ENCODE measurements at regions of chr5 and their contacts with region 1.

Region 1: GRCh38 chr5:39376293-39376714 is 12.0 kb upstream of the C9 start:
- DNase-seq: peak; percentile 49
- H3K4me3 Mint-ChIP-seq: no peak overlapping the region
- H3K27ac Mint-ChIP-seq: no peak overlapping the region
- H3K4me1 Mint-ChIP-seq: no peaks in the 10 kb centered on the region
- H3K27me3 Mint-ChIP-seq: peaks cover 14% of the 10 kb centered on the region

Region 2: DNA sequence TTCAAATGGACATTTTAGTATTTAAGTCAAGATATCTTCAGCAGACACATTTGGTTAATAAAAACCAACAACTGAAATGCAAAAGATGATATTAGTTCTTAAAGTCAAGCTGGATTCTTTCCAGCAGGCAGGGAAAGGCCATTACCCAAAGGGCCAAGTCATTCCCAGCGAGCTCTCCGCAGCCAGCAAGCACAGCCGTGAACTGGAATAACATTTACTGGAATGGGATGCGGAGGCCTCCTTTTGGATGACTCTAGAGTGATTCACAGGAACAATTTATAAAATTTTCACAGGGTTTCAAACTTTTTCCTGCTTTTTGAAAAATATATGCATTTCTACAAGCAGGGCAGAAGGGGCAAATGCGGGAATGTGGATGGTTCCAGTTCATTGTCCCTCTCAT is 125.1 kb after region 1 on chr5:
- CTCF ChIA-PET with region 1: no interaction called
- DNase-seq: no peak
- H3K4me3 Mint-ChIP-seq: no peak overlapping the region
- H3K27ac Mint-ChIP-seq: no peak overlapping the region
- H3K4me1 Mint-ChIP-seq: no peaks in the 10 kb centered on the region
- H3K27me3 Mint-ChIP-seq: peaks cover 7% of the 10 kb centered on the region

Region 3: DNA sequence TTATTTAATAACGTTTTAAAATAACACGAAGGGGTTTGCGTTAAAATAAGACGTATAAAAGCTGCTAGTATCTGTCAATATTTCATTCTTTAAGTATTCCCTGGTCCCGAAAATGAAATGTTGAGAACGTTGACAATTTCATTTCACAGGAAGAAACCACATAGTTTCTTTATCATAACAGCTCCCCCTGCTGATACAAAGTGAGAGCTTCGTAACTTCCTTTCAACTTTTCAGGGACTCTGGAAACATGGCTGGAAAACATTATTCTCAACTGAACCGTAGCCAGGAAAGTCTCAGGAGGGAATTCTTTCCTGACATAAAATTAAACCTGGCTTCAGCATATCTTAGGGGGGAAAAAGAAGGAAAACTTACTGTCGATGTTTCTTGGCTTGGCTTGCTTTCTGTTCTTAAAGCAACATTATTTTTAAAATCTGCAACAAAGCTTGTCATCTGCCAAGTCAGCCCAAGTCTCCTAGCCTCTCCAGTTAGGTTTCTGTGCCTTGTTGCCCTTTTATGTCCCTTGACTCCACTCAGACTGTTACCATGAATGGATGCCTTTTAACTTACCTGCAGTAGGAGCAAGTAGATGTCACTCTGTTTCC is 171.3 kb after region 1 on chr5:
- CTCF ChIA-PET with region 1: interaction called, 56 read pairs
- DNase-seq: no peak
- H3K4me3 Mint-ChIP-seq: no peak overlapping the region
- H3K27ac Mint-ChIP-seq: no peak overlapping the region
- H3K4me1 Mint-ChIP-seq: no peaks in the 10 kb centered on the region
- H3K27me3 Mint-ChIP-seq: no peaks in the 10 kb centered on the region

Region 4: DNA sequence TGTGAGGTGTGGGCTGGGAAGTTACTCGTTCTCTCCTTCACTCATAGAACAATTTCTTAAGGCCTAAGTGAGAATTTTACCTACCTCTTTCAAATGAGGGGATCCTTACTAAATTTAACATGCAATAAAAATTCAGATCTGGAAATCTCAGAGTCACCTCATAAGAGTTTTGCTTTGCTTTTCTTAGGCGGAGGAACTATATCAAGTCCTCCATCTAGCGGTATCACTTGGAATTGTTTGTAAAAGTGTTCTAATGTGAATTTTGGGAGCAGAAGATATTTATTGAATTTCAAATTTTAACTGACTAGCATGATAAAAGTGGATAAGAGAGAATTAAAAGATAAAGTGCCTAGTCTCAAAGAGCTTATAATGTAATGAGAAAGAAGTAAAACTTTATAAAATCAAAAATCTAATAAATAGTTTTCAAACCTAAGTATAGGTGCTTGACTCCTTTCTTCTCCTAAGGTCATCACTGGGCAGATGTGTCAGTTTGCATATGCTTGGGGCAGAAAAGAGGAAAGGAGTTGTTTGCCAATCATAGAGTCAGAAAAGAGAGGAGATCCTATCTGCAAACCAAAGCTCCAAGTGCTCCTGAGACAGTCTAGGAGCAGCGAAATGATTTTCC is 194.2 kb after region 1 on chr5:
- CTCF ChIA-PET with region 1: interaction called, 26 read pairs
- DNase-seq: no peak
- H3K4me3 Mint-ChIP-seq: no peak overlapping the region
- H3K27ac Mint-ChIP-seq: no peak overlapping the region
- H3K4me1 Mint-ChIP-seq: no peaks in the 10 kb centered on the region
- H3K27me3 Mint-ChIP-seq: peaks cover 4% of the 10 kb centered on the region

Measured in activated naive CD4-positive, alpha-beta T cell treated with anti-CD3 and anti-CD28 coated beads, Interleukin-2, amount 10 ng/mL, durations not matched to agents 7 days and 5 days (primary cell).